Activated naive CD8-positive, alpha-beta T cell treated with anti-CD3 and anti-CD28 coated beads, Interleukin-2, amount 10 ng/mL, durations not matched to agents 7 days and 5 days (primary cell): ENCODE measurements at regions of chr14 and their contacts with region 1.

Region 1: GRCh38 chr14:52351233-52352060 is 37.3 kb downstream of the PTGER2 start:
- DNase-seq: no peak
- ATAC-seq: peak; percentile 72
- H3K4me3 Mint-ChIP-seq: peak overlapping the region; percentile 83
- H3K27ac Mint-ChIP-seq: peak overlapping the region; percentile 95
- H3K4me1 Mint-ChIP-seq: peaks cover 67% of the 10 kb centered on the region
- H3K27me3 Mint-ChIP-seq: no peaks in the 10 kb centered on the region

Region 2: DNA sequence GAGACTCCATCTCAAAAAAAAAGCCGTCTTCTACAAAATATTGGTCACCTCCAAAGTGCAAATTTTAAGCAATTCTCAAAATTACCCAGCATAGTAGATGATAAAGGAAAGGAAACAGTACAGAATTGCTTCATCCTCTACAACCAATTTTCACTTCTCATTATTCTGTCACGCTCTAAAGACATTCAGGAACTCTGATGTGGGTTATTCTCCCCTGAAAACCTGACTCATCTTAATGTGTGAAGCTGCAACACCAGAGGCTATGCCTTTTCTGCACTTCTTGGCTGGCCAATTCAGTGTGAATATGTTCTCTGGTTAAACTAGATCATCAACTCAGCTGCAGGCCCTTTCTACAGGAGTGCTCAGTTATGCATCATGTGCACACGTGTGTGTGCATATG is 26.3 kb before region 1 on chr14:
- POLR2A ChIA-PET with region 1: interaction called, 225 read pairs
- DNase-seq: no peak
- ATAC-seq: peak; percentile 93
- H3K4me3 Mint-ChIP-seq: peak overlapping the region; percentile 78
- H3K27ac Mint-ChIP-seq: peak overlapping the region; percentile 71
- H3K4me1 Mint-ChIP-seq: peaks cover 75% of the 10 kb centered on the region
- H3K27me3 Mint-ChIP-seq: no peaks in the 10 kb centered on the region

Region 3: DNA sequence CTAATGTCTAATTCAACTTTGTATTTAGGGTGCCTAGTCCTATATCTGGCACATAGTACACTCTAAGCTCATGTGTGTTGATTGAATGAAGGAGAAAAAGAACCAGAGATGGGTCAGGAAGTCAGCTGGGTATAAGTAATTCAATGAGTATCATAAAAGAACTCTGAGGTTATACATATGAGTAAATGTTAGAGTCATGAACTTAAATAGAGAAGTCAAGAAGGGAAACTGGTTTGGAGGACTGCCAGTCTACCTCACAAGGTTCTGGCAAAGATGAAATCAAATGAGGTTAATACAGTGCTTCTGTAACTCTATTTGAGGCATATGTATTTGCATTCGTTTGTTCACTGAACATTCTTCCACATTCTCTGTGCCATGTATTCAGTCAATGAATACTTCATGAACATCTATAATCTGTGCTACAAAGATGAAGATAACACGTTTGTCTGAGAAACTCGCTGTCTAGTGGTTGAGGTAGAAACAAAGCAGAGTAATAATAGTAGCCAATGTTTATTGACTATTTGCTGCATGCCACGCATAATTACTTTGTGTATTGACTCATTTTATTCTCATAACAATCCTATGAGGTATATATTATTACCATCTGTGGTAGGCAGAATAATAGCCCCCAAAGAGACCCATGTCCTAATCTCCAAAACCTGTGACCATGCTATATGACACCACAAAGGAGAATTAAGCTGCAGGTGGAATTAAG is 51.5 kb after region 1 on chr14:
- POLR2A ChIA-PET with region 1: interaction called, 36 read pairs
- DNase-seq: no peak
- ATAC-seq: peak; percentile 54
- H3K4me3 Mint-ChIP-seq: peak overlapping the region; percentile 37
- H3K27ac Mint-ChIP-seq: peak overlapping the region; percentile 79
- H3K4me1 Mint-ChIP-seq: peaks cover 69% of the 10 kb centered on the region
- H3K27me3 Mint-ChIP-seq: no peaks in the 10 kb centered on the region